Naive thymus-derived CD4-positive, alpha-beta T cell (primary cell): ENCODE measurements at regions of chr9 and their contacts with region 1.

Region 1: DNA sequence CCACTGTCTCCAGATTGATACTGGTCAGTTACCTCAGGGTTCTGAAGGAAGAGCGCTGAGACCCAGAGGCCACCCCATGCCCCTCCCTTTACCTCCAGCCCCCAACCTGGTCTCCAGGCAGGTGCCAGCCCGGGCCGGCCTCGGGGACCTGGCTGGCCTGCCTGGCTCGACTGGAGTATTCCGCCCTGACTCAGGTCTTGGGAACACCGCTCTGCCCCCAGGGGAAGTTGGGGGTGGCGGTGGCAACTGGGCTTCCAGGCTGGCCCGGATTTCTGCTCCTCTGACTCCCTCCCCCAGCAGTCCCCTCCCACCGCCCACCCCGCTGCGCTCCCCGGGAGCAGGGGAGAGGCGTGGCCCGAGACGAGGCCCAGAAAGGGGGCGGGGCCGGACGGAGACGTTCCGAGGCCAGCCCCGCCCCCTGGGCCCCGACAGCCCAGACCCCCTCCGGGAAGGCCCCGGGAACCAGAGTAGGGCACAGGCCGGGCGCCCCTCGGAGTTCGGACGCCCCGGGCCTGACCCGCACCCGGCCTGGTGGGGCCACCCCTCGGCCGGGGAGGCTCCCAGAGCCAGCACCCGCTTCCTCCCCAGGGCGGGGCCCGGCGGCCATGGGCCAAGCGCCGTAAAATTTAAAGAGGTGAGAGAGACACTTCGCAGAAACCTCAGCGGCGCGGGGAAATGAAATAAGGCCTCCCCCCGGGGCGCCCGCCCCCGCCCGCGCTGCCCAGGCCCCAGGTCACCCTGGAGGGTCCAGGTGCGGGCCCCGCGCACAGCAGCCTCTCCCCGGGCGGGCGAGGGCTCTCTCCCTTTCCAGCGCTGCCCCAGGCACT is 82.4 kb upstream of the ZBTB43 start:
- DNase-seq: peak; percentile 75 to 93 (median 84)
- ATAC-seq: peak; percentile 82
- H3K4me3 ChIP-seq: peak overlapping the region; percentile 84
- H3K4me3 Mint-ChIP-seq: peak overlapping the region; percentile 82 to 96 (median 88)
- H3K27ac ChIP-seq: peak overlapping the region; percentile 90
- H3K27ac Mint-ChIP-seq: peak overlapping the region; percentile 92 to 99 (median 98)
- H3K4me1 ChIP-seq: peaks cover 31 to 44% of the 10 kb centered on the region in 2 donors
- H3K4me1 Mint-ChIP-seq: peaks cover 42 to 53% (median 49%) of the 10 kb centered on the region in 7 donors
- H3K27me3 ChIP-seq: no peaks in the 10 kb centered on the region
- H3K27me3 Mint-ChIP-seq: peaks cover 0 to 17% (median 0%) of the 10 kb centered on the region in 5 donors

Region 2: GRCh38 chr9:124800306-124801259 is 1921.9 kb before region 1 on chr9:
- CTCF ChIA-PET with region 1: no interaction called
- POLR2A ChIA-PET with region 1: no interaction called
- intact Hi-C with region 1: no loop called
- DNase-seq: no peak
- ATAC-seq: peak; percentile 73
- H3K4me3 ChIP-seq: no peak overlapping the region
- H3K4me3 Mint-ChIP-seq: no peak overlapping the region
- H3K27ac ChIP-seq: no peak overlapping the region
- H3K27ac Mint-ChIP-seq: no peak overlapping the region
- H3K4me1 ChIP-seq: no peaks in the 10 kb centered on the region
- H3K4me1 Mint-ChIP-seq: no peaks in the 10 kb centered on the region
- H3K27me3 ChIP-seq: no peaks in the 10 kb centered on the region
- H3K27me3 Mint-ChIP-seq: peaks cover 7 to 16% (median 10%) of the 10 kb centered on the region in 5 donors

Region 3: DNA sequence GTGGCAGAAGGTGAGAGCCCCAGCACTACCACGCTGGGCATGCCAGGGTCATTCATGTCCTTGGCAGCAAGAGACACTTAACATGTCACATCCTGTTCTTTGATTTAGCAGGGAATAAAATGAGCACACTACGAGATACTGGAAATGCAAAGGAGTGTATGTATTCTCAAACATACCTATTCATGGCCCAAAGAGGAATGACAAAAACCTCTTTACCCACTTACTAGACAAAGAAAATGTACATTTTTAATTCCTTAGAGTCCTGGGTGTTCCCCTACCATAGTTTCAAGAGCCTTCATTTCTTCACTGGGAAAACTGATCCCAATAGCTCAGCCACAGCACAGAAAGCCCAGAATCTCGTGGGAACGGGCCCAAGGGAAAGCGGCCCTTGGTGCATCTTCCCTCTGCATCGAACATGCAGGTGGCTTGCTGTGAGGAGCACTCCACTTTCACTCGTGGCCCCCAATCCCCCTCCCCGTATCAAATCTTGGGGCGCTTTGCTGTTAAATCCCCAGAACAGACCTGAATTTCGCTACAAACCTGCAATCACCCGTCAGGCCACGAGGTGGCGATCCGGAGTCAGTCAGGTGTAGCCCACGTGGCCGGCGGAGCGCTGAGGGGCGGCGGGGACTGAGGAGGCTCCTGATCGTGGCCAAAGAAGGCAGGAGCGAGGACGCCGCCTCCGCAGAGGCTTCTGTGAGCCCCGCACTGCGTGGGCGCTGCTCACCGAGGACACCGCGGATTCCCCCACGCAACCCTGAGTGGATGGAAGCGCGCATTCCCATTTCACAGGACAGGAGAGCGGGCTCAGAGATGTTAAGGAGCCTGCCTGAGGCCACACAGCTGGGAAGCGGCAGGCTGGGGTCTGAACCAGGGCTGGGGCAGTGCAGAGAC is 17.3 kb before region 1 on chr9:
- CTCF ChIA-PET with region 1: interaction called, 13 read pairs
- POLR2A ChIA-PET with region 1: interaction called, 24 read pairs
- intact Hi-C with region 1: loop called (anchors 1 kb)
- DNase-seq: peak; percentile 67 to 89 (median 83)
- ATAC-seq: peak; percentile 90
- H3K4me3 ChIP-seq: peak overlapping the region; percentile 38
- H3K4me3 Mint-ChIP-seq: peak overlapping the region; percentile 45 to 79 (median 72)
- H3K27ac ChIP-seq: no peak overlapping the region
- H3K27ac Mint-ChIP-seq: peak overlapping the region in 3 of 9 donors; percentile 30 to 64 (median 43)
- H3K4me1 ChIP-seq: peaks cover 3 to 10% of the 10 kb centered on the region in 2 donors
- H3K4me1 Mint-ChIP-seq: peaks cover 10 to 23% (median 22%) of the 10 kb centered on the region in 7 donors
- H3K27me3 ChIP-seq: no peaks in the 10 kb centered on the region
- H3K27me3 Mint-ChIP-seq: peaks cover 13 to 35% (median 26%) of the 10 kb centered on the region in 5 donors

Region 4: GRCh38 chr9:126745574-126746411 is 23.3 kb after region 1 on chr9:
- CTCF ChIA-PET with region 1: no interaction called
- POLR2A ChIA-PET with region 1: interaction called, 5 read pairs
- intact Hi-C with region 1: loop called (anchors 1 to 2 kb)
- DNase-seq: peak in 1 of 9 donors; percentile 18
- ATAC-seq: no peak
- H3K4me3 ChIP-seq: no peak overlapping the region
- H3K4me3 Mint-ChIP-seq: peak overlapping the region in 2 of 10 donors; percentile 22 to 50
- H3K27ac ChIP-seq: no peak overlapping the region
- H3K27ac Mint-ChIP-seq: peak overlapping the region in 8 of 9 donors; percentile 11 to 64 (median 29)
- H3K4me1 ChIP-seq: peaks cover 0 to 9% of the 10 kb centered on the region in 2 donors
- H3K4me1 Mint-ChIP-seq: peaks cover 21 to 40% (median 32%) of the 10 kb centered on the region in 7 donors
- H3K27me3 ChIP-seq: no peaks in the 10 kb centered on the region
- H3K27me3 Mint-ChIP-seq: peaks cover 0 to 10% (median 0%) of the 10 kb centered on the region in 5 donors

Region 5: DNA sequence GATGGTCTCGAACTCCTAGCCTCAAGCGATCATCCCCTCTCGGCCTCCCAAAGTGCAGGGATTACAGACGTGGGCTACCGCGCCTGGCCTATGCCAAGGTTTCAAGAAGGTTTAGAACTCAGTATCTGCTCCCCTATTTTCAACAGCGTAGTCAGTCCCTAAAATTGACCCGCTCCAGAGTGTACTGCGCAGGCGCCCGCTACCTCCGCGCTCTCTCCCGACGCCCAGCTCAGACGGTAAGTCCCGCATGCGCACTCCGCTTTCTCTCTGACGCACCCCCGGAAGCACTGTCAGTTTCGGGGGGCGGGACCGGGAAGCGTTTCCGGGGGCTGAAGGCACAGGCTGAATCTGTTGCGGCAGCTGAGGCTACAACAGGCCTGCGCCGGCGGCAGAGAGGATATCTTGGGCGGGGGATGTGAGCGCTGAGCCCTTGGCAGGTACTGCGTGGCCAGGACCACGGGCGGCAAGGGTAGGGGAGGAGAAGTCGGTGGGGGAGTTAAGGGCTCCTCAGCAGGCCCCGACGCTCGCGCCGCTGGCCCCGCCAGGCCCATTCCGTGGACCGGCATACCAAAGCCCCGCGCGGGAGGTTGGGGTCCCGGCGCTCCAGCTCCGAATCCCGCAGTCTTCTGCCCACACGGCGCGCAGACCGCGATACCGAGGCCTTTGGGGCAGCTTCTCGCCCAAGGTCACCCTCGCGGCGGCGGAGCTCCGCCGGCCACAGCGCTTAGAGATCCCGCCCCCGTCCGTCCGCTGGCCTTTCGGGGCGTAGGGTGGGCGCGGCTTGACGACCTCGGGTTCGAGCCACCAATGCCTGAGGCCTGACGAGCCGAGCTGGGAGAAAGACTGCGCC is 82.5 kb after region 1 on chr9 and contains the start of gene ZBTB43:
- CTCF ChIA-PET with region 1: no interaction called
- POLR2A ChIA-PET with region 1: interaction called, 28 read pairs
- intact Hi-C with region 1: loop called (anchors 1 kb)
- DNase-seq: peak; percentile 95 to 98 (median 98)
- ATAC-seq: peak; percentile 90
- H3K4me3 ChIP-seq: peak within 1 kb of the TSS; percentile 72
- H3K4me3 Mint-ChIP-seq: peak within 1 kb of the TSS; percentile 81 to 99 (median 97)
- H3K27ac ChIP-seq: peak within 1 kb of the TSS; percentile 83
- H3K27ac Mint-ChIP-seq: peak within 1 kb of the TSS; percentile 91 to 99 (median 95)
- H3K4me1 ChIP-seq: peaks cover 10 to 17% of the 10 kb centered on the region in 2 donors
- H3K4me1 Mint-ChIP-seq: peaks cover 32 to 50% (median 41%) of the 10 kb centered on the region in 7 donors
- H3K27me3 ChIP-seq: no peaks in the 10 kb centered on the region
- H3K27me3 Mint-ChIP-seq: peaks cover 0 to 3% (median 0%) of the 10 kb centered on the region in 5 donors
- total RNA-seq, gene ZBTB43: 17.8 to 31.4 (median 28.2) TPM

Region 6: GRCh38 chr9:126914458-126915280 is 192.2 kb after region 1 on chr9 and contains the start of gene RALGPS1:
- CTCF ChIA-PET with region 1: no interaction called
- POLR2A ChIA-PET with region 1: no interaction called
- intact Hi-C with region 1: loop called in 1 of 2 experiments (anchors 5 kb)
- DNase-seq: peak; percentile 68 to 88 (median 81)
- ATAC-seq: peak; percentile 98
- H3K4me3 ChIP-seq: peak within 1 kb of the TSS; percentile 47
- H3K4me3 Mint-ChIP-seq: peak within 1 kb of the TSS; percentile 73 to 90 (median 82)
- H3K27ac ChIP-seq: peak within 1 kb of the TSS; percentile 13
- H3K27ac Mint-ChIP-seq: peak within 1 kb of the TSS in 6 of 9 donors; percentile 14 to 89 (median 75)
- H3K4me1 ChIP-seq: no peaks in the 10 kb centered on the region
- H3K4me1 Mint-ChIP-seq: peaks cover 5 to 13% (median 7%) of the 10 kb centered on the region in 7 donors
- H3K27me3 ChIP-seq: no peaks in the 10 kb centered on the region
- H3K27me3 Mint-ChIP-seq: peaks cover 0 to 36% (median 0%) of the 10 kb centered on the region in 5 donors
- total RNA-seq, gene RALGPS1: 2.6 to 8.3 (median 5.8) TPM

Region 7: GRCh38 chr9:127707726-127708147 is 985.3 kb after region 1 on chr9:
- CTCF ChIA-PET with region 1: no interaction called
- POLR2A ChIA-PET with region 1: no interaction called
- intact Hi-C with region 1: no loop called
- DNase-seq: no peak
- ATAC-seq: peak; percentile 76
- H3K4me3 ChIP-seq: no peak overlapping the region
- H3K4me3 Mint-ChIP-seq: no peak overlapping the region
- H3K27ac ChIP-seq: no peak overlapping the region
- H3K27ac Mint-ChIP-seq: peak overlapping the region in 3 of 9 donors; percentile 45 to 67 (median 51)
- H3K4me1 ChIP-seq: peaks cover 0 to 15% of the 10 kb centered on the region in 2 donors
- H3K4me1 Mint-ChIP-seq: peaks cover 15 to 33% (median 22%) of the 10 kb centered on the region in 7 donors
- H3K27me3 ChIP-seq: no peaks in the 10 kb centered on the region
- H3K27me3 Mint-ChIP-seq: no peaks in the 10 kb centered on the region